Heart left ventricle (tissue), 16 donors: ENCODE measurements at regions of chr16 and their contacts with region 1.

Region 1: DNA sequence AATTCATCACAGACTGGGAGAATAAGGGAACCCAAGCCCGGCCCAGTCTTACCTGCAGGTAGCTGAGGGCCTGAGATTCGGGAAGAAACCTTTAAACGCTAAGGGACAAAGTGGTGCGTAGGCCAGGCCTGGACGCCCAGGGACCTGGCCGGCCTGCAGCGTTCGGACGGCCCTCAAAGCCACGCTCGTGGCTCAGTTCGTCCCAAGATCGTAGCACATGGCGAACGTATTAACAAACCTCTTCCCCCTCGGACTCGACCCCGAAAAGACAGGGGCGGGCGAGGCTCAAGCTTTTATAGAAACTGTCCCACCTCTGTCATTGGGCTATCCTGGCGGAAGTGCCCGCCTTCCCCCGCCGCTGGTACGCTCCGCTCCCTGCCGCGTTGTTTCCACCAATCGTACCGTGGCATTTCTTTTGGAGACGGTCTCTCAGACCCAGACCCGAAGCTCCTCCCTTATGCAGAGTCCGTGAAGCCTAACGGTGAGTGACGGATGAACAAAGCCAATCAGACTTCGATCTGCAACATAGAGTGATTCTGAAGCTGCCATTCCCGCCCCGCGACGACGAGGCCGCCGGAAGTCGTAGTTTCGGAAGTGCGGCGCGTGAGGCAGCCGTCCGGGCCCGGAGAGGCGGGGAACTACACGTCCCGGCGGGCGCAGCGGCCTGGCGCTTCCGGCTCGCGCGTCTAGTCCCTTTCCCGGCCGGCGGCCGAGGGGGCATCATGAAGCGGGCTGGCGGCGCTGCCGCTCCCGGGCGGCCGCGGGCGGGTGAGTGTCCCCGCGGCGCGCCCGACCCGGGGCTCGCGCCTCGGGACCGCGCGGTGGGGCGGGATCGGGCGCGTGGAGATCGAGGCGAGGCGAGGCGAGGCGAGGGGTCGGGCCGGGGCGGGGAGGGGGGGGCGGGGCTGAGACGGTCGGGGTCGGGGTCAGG is at the start of gene TRAF7:
- DNase-seq: peak; percentile 98 to 99 (median 99)
- ATAC-seq: peak; percentile 92 to 96 (median 94)
- H3K4me3 ChIP-seq: peak within 1 kb of the TSS; percentile 52 to 98 (median 80)
- H3K27ac ChIP-seq: peak within 1 kb of the TSS; percentile 20 to 91 (median 84)
- H3K4me1 ChIP-seq: peaks cover 22 to 89% (median 69%) of the 10 kb centered on the region in 12 donors
- H3K27me3 ChIP-seq: no peaks in the 10 kb centered on the region
- CTCF ChIP-seq: peak in 1 of 12 donors; percentile 13
- POLR2A ChIP-seq: peak; percentile 98 to 100
- total RNA-seq, gene TRAF7: 20.2 to 40.2 (median 27.0) TPM

Region 2: DNA sequence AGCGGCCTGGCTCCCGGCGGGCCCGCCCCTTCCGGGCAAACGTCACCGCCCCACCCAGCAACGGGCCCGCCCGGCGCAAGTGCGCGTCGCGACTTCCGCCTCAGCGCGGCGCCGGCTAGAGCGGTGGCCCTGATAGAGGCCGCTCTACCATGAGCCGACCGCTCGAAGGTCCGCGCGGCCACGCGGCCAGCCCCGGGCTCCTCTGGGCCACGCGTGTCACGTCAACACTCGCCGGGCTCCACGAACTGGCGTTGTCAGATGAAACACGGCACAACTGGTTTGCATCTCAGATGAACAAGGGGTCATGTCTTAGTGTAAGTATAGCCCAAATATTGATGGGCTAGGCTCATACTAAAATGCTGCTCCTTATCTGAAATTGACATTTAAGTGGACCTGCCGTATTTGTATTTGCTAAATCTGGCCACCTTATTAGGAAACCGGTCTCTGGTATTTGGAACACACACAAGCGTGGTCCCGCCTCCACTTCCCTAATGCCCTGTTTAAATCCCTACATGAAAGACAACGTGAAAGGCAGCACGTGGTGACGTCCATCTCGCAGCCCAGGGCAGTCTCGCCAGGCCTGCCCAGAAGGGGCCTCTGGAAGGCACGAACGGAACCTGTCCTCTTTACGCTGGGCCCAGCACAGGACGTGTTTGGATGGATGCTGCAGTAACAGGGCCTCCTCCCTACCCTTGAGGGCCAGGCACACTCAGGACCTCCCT is 145.4 kb before region 1 on chr16 and contains the start of gene ZNF598:
- intact Hi-C with region 1: loop called in 2 of 10 experiments (anchors 5 to 10 kb)
- DNase-seq: peak; percentile 87 to 91 (median 88)
- ATAC-seq: peak; percentile 90 to 97 (median 96)
- H3K4me3 ChIP-seq: peak within 1 kb of the TSS; percentile 69 to 100 (median 94)
- H3K27ac ChIP-seq: peak within 1 kb of the TSS; percentile 58 to 98 (median 93)
- H3K4me1 ChIP-seq: peaks cover 20 to 53% (median 38%) of the 10 kb centered on the region in 12 donors
- H3K27me3 ChIP-seq: no peaks in the 10 kb centered on the region
- CTCF ChIP-seq: peak in 2 of 12 donors; percentile 6 to 24
- POLR2A ChIP-seq: peak in 1 of 2 donors; percentile 92
- total RNA-seq, gene ZNF598: 10.9 to 47.4 (median 17.0) TPM

Region 3: GRCh38 chr16:2023098-2023925 is 132.0 kb before region 1 on chr16:
- intact Hi-C with region 1: loop called in 3 of 10 experiments (anchors 1 to 5 kb)
- DNase-seq: peak; percentile 92 to 97 (median 94)
- ATAC-seq: peak; percentile 85 to 93 (median 86)
- H3K4me3 ChIP-seq: peak overlapping the region in 10 of 12 donors; percentile 3 to 47 (median 42)
- H3K27ac ChIP-seq: peak overlapping the region; percentile 39 to 97 (median 82)
- H3K4me1 ChIP-seq: peaks cover 0 to 65% (median 50%) of the 10 kb centered on the region in 12 donors
- H3K27me3 ChIP-seq: peaks cover 10 to 47% (median 32%) of the 10 kb centered on the region in 9 donors
- CTCF ChIP-seq: peak; percentile 90 to 99 (median 96)
- POLR2A ChIP-seq: peak in 1 of 2 donors; percentile 81

Region 4: GRCh38 chr16:2096853-2097595 is 58.3 kb before region 1 on chr16:
- intact Hi-C with region 1: no loop called
- DNase-seq: no peak
- ATAC-seq: peak in 2 of 4 donors; percentile 17 to 22
- H3K4me3 ChIP-seq: no peak overlapping the region
- H3K27ac ChIP-seq: no peak overlapping the region
- H3K4me1 ChIP-seq: no peaks in the 10 kb centered on the region
- H3K27me3 ChIP-seq: no peaks in the 10 kb centered on the region
- CTCF ChIP-seq: no peak
- POLR2A ChIP-seq: no peak

Region 5: DNA sequence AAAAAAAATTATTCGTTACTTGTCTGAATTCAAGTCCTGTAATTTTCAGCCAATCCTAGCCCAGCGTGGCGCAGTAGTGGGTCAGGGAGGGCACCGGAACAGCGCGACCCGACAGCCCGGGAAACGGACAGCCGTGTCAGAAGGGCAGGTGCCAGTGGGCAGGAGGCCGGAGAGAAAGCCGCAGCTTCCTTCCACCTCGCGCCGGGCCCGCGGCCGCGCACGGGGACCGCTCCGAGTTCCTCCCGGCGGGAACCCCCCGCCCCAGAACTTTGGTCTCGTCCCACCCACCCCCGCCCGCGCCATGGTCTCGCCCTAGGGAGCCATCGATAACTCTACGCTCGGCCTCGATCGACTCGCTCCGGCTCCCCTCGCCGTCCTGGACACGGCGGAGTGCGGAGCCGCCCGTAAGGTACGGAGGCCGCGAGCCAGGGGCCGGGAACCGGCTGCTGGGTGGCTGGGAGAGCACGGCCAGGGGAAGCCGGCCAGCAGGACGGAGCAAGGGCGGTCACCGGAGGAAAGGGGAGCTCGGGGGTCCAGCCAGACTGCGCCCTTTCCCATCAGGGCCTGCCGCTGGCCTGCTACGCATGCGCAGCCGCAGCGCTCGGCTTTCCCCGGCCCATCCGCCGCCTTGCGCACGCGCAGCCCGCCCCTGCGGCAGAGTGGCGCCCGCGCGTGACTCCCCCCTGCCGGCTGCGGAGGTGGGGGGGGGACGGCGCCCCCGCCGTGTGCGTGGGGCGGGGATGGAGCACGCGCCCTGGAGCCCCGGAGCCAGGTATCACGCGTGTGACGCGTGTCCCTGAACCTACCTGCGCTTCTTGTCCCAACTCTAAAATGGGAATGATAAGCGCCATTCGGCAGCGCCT is 50.0 kb after region 1 on chr16 and contains the start of gene MLST8:
- intact Hi-C with region 1: loop called in 6 of 10 experiments (anchors 2 to 10 kb)
- DNase-seq: peak; percentile 85 to 96 (median 89)
- ATAC-seq: peak; percentile 53 to 84 (median 82)
- H3K4me3 ChIP-seq: peak within 1 kb of the TSS; percentile 66 to 96 (median 80)
- H3K27ac ChIP-seq: peak within 1 kb of the TSS; percentile 95 to 100 (median 99)
- H3K4me1 ChIP-seq: peaks cover 3 to 27% (median 15%) of the 10 kb centered on the region in 12 donors
- H3K27me3 ChIP-seq: no peaks in the 10 kb centered on the region
- CTCF ChIP-seq: peak in 6 of 12 donors; percentile 13 to 43 (median 28)
- POLR2A ChIP-seq: peak; percentile 49 to 73
- total RNA-seq, gene MLST8: 19.8 to 49.0 (median 22.8) TPM

Region 6: GRCh38 chr16:2213817-2214720 is 58.7 kb after region 1 on chr16:
- intact Hi-C with region 1: loop called in 2 of 10 experiments (anchors 5 to 10 kb)
- DNase-seq: no peak
- ATAC-seq: no peak
- H3K4me3 ChIP-seq: peak overlapping the region; percentile 64 to 99 (median 88)
- H3K27ac ChIP-seq: peak overlapping the region; percentile 27 to 94 (median 88)
- H3K4me1 ChIP-seq: peaks cover 14 to 52% (median 29%) of the 10 kb centered on the region in 12 donors
- H3K27me3 ChIP-seq: no peaks in the 10 kb centered on the region
- CTCF ChIP-seq: no peak
- POLR2A ChIP-seq: no peak

Region 7: DNA sequence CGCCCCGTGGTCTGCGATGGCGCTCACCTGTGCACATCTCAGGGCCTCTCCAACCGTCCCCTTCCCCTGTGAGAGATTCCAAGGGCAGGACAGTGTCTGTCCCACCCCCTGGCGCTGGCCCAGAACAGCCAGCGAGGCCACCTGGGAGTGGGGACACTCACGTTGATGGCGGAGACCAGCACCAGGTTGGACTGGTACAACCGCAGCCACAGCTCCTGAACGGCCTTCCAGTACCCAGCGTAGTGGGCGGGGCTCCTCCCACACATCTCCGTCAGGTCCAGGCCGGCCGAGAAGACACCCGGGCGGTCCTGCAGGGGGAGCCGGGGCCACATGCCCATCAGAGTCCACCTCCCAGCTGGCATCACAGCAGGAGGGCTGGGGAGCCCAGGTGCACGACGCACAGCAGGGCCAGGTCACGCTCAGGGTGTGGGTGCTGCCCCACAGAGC is 88.9 kb after region 1 on chr16:
- intact Hi-C with region 1: loop called in 1 of 10 experiments (anchors 10 kb)
- DNase-seq: no peak
- ATAC-seq: peak in 1 of 4 donors; percentile 5
- H3K4me3 ChIP-seq: no peak overlapping the region
- H3K27ac ChIP-seq: no peak overlapping the region
- H3K4me1 ChIP-seq: no peaks in the 10 kb centered on the region
- H3K27me3 ChIP-seq: no peaks in the 10 kb centered on the region
- CTCF ChIP-seq: no peak
- POLR2A ChIP-seq: no peak

Region 8: GRCh38 chr16:2251483-2252240 is 96.3 kb after region 1 on chr16 and contains the start of gene ECI1:
- intact Hi-C with region 1: loop called in 4 of 10 experiments (anchors 1 to 10 kb)
- DNase-seq: peak; percentile 97 to 99 (median 97)
- ATAC-seq: peak; percentile 97 to 99 (median 98)
- H3K4me3 ChIP-seq: peak within 1 kb of the TSS; percentile 63 to 99 (median 80)
- H3K27ac ChIP-seq: peak within 1 kb of the TSS; percentile 88 to 97 (median 92)
- H3K4me1 ChIP-seq: peaks cover 2 to 24% (median 16%) of the 10 kb centered on the region in 12 donors
- H3K27me3 ChIP-seq: no peaks in the 10 kb centered on the region
- CTCF ChIP-seq: peak; percentile 60 to 96 (median 78)
- POLR2A ChIP-seq: peak; percentile 43 to 90
- total RNA-seq, gene ECI1: 84.6 to 178 (median 142) TPM